ENCODE measurements at regions of chr10 and their contacts with region 1.

Region 1: GRCh38 chr10:91251430-91252056 is 31.1 kb downstream of the PCGF5 start:
- DNase-seq: peak; percentile 37 to 53
- H3K4me3 ChIP-seq: no peak overlapping the region
- H3K4me3 Mint-ChIP-seq: no peak overlapping the region
- H3K27ac Mint-ChIP-seq: no peak overlapping the region
- H3K4me1 ChIP-seq: no peaks in the 10 kb centered on the region
- H3K4me1 Mint-ChIP-seq: no peaks in the 10 kb centered on the region
- H3K27me3 ChIP-seq: no peaks in the 10 kb centered on the region
- H3K27me3 Mint-ChIP-seq: peaks cover 3% of the 10 kb centered on the region
- CTCF ChIP-seq: peak; percentile 86 to 93

Region 2: DNA sequence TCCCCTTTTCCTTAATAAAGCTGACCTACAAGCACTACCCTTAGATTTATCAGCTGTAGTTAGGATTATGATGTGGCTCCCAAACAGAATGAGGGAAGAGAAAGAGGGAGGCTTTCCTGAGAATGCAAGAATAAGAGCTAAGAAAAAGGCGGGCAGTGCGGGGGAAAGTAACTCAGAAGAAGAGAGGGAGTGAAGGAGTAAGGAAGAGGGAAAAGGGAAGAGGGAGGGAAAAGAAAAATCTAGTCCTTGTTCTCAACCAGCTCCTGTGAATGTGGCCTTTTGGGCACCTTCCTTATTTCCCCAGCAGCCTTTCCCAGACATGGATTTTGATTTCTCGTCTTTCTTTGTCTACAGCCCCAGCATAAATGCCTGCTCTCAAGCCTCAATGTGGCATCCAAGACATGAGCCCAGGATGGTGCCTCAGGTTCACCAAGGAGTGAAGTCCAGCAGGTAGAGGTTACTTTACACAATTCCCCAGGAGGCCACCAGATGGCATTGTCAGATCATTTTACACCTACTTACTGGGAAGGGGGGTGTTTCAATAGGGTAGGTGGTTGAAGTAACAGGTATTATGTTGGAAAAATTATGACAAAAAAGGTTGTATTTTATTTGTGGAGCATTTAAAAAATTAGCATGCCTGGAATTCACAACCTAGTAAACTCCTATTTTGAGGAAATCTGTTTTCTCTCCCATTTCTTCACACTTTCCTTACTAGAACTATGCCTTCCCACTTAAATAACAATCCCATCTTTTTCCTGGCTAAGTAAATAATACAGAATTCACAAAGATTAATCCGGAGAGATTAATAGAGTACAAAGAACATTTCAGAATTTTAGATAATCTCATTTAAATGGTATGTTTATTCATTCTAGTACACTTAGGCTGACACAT is 500.2 kb before region 1 on chr10:
- CTCF ChIA-PET with region 1: no interaction called
- POLR2A ChIA-PET with region 1: no interaction called
- intact Hi-C with region 1: loop called (anchors 2 kb)
- DNase-seq: peak; percentile 52 to 70
- H3K4me3 ChIP-seq: no peak overlapping the region
- H3K4me3 Mint-ChIP-seq: no peak overlapping the region
- H3K27ac Mint-ChIP-seq: no peak overlapping the region
- H3K4me1 ChIP-seq: no peaks in the 10 kb centered on the region
- H3K4me1 Mint-ChIP-seq: no peaks in the 10 kb centered on the region
- H3K27me3 ChIP-seq: no peaks in the 10 kb centered on the region
- H3K27me3 Mint-ChIP-seq: peaks cover 10% of the 10 kb centered on the region
- CTCF ChIP-seq: peak; percentile 80 to 82

Region 3: GRCh38 chr10:90912174-90912573 is 339.4 kb before region 1 on chr10:
- CTCF ChIA-PET with region 1: interaction called, 11 read pairs
- POLR2A ChIA-PET with region 1: no interaction called
- intact Hi-C with region 1: loop called (anchors 1 kb)
- DNase-seq: no peak
- H3K4me3 ChIP-seq: no peak overlapping the region
- H3K4me3 Mint-ChIP-seq: peak overlapping the region; percentile 8
- H3K27ac Mint-ChIP-seq: peak overlapping the region; percentile 55
- H3K4me1 ChIP-seq: peaks cover 13% of the 10 kb centered on the region
- H3K4me1 Mint-ChIP-seq: peaks cover 35% of the 10 kb centered on the region
- H3K27me3 ChIP-seq: no peaks in the 10 kb centered on the region
- H3K27me3 Mint-ChIP-seq: no peaks in the 10 kb centered on the region
- CTCF ChIP-seq: no peak

Region 4: DNA sequence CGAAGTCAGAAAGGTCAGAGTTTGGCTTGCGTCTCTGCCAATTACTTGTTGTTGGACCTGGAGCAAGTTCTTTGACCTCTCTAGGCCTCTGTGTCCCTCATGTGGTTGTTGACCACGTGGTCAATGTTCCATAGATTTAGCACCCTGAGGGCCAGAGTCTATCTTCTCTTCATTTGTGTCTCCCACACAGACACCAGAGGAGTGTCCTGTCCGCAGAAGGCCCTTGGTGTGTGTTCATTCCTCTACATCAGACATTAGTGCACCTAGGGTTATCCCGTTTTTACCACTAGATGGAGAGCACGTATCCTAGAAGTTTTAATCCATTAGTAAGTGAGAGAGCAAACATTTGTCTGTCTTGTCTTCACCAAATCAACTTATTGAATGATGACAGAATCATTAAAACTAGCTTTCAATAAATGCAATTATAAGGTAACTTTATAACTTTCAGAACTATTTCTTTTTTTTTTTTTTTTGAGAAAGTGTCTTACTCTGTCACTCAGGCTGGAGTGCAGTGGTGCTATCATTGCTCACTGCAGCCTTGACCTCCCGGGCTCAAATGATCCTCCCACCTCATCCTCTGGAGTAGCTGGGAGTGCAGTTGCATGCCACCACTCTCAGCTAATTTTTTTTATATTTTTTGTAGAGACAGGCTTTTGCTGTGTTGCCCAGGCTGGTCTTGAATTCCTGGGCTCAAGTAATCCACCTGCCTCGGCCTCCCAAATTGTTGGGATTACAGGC is 208.2 kb before region 1 on chr10:
- CTCF ChIA-PET with region 1: no interaction called
- POLR2A ChIA-PET with region 1: no interaction called
- intact Hi-C with region 1: loop called (anchors 1 kb)
- DNase-seq: peak in 1 of 2 experiments; percentile 23
- H3K4me3 ChIP-seq: no peak overlapping the region
- H3K4me3 Mint-ChIP-seq: no peak overlapping the region
- H3K27ac Mint-ChIP-seq: no peak overlapping the region
- H3K4me1 ChIP-seq: no peaks in the 10 kb centered on the region
- H3K4me1 Mint-ChIP-seq: peaks cover 5% of the 10 kb centered on the region
- H3K27me3 ChIP-seq: no peaks in the 10 kb centered on the region
- H3K27me3 Mint-ChIP-seq: peaks cover 17% of the 10 kb centered on the region
- CTCF ChIP-seq: peak; percentile 43 to 55

Region 5: DNA sequence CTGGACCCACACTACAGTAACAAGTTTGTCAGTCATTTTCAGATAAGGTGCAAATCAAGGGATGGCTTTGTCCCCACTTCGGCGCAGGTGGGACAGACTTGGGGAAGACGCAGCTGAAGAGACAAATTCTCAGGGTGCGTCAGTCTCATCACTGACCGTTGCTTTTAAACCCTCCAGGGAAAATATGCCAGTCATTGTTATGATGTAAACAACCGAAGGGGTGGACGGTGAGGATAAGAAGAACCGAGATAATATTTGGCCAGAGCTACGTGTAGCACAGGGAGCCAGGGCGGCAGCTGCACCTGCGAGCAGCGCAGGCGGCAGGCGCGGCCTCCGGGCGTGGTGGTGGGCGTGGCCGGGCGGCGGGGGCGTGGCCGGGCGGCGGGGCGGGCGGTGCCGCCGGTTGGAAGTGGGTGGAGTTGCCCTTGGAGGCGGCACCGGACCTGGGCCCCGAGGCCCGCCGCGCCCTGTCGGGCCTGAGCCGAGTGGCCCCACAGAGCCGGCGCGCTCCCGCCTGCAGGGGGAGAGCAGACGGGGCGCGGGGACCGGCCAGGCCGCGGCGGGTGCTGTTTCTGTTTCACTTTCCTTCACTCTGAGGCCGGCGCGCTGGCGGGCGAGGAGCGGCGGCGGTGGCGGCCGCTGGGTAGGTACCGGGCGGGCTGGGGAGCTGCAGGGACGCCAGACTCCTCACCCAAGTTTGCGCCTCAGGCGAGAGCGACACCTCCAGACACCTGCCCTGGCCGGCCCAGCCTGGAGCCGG is 31.2 kb before region 1 on chr10 and contains the start of gene PCGF5:
- CTCF ChIA-PET with region 1: no interaction called
- POLR2A ChIA-PET with region 1: no interaction called
- intact Hi-C with region 1: loop called (anchors 1 kb)
- DNase-seq: peak; percentile 89 to 96
- H3K4me3 ChIP-seq: peak within 1 kb of the TSS; percentile 93
- H3K4me3 Mint-ChIP-seq: peak within 1 kb of the TSS; percentile 86
- H3K27ac Mint-ChIP-seq: no peak within 1 kb of the TSS
- H3K4me1 ChIP-seq: no peaks in the 10 kb centered on the region
- H3K4me1 Mint-ChIP-seq: peaks cover 13% of the 10 kb centered on the region
- H3K27me3 ChIP-seq: no peaks in the 10 kb centered on the region
- H3K27me3 Mint-ChIP-seq: peaks cover 14% of the 10 kb centered on the region
- CTCF ChIP-seq: peak; percentile 23 to 26
- total RNA-seq, gene PCGF5: 9.6 and 12.0 TPM in 2 replicates

Region 6: DNA sequence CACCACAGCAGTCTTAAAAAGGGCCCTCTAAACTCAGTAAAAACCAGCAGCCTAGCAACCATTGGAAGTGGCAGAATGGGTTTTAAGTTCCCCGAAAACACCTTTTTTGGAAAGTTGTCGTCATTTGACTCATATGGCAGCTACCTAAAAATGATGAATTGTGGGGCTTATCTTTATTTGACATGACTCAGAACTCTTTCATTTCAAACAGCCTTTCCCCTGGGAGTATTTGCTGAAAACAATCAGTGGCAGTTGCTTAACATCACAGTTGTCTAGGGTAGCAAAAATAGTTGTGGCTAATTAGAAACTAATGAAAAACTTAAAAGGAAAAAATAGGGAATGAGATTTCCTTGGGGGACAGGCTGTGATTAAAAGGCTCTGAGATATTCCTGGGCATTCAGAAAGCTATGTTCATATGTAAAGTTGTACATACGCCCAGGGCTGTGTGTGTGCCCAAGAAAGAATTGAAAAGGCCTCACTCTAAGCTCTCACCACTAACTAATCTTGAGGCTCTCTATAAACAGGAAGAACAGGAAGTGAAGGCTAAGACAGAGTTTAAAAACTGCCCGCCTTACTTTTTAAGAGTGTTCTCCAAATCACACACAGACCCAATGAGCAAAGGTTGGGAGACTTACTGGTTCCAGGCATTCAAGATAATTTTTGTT is 76.9 kb after region 1 on chr10:
- CTCF ChIA-PET with region 1: no interaction called
- POLR2A ChIA-PET with region 1: no interaction called
- intact Hi-C with region 1: no loop called
- DNase-seq: no peak
- H3K4me3 ChIP-seq: no peak overlapping the region
- H3K4me3 Mint-ChIP-seq: no peak overlapping the region
- H3K27ac Mint-ChIP-seq: no peak overlapping the region
- H3K4me1 ChIP-seq: no peaks in the 10 kb centered on the region
- H3K4me1 Mint-ChIP-seq: no peaks in the 10 kb centered on the region
- H3K27me3 ChIP-seq: no peaks in the 10 kb centered on the region
- H3K27me3 Mint-ChIP-seq: peaks cover 3% of the 10 kb centered on the region
- CTCF ChIP-seq: no peak

Measured in Caco-2 (cell line).